Calu3 (cell line): ENCODE measurements at regions of chr6 and their contacts with region 1.

Region 1: DNA sequence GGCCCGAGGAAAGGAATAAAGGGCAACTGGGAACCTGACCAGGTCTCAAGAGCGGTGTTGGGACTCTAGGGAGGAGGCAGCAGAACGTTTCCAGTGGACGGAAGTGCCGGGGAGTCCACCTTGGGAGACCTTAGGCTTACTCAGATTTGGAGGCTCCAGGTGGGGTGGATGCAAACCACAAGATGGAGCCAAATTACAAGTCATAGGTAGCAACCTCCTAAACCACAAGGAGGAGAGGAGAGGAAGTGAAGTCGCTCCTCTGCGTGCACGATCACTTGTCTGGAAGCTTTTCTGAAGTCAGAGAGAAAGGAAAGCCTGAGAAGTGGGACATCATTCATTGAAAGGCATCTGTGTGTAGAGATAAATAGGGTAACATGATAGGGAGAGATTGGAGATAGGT is 9.3 kb downstream of the HLA-DOA start:
- DNase-seq: peak; percentile 74
- H3K4me3 Mint-ChIP-seq: no peak overlapping the region
- H3K27ac Mint-ChIP-seq: no peak overlapping the region
- H3K4me1 Mint-ChIP-seq: peaks cover 10% of the 10 kb centered on the region
- H3K27me3 Mint-ChIP-seq: peaks cover 63% of the 10 kb centered on the region
- CTCF ChIP-seq: peak; percentile 70

Region 2: DNA sequence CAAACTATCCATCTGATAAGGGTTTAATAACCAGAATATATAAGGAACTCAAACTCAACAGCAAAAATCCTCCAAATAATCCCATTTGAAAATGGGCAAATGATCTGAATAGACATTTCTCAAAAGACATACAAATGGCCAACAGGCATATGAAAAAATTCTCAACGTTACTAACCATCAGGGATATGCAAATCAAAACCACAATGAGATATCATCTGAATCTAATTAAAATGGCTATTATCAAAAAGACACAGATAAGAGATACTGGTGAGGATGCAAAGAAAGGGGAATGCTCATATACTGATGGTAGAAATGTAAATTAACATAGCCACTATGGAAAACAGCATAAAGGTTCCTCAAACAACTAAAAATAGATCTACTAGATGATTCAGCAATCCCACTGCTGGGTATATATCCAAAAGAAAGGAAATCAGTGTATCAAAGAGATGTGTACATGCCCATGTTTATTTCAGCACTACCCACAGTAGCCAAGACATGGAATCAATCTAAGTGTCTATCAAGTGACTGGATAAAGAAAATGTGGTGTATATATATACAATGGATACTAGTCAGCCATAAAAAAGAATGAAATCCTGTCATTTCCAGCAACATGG is 37.7 kb before region 1 on chr6:
- CTCF ChIA-PET with region 1: no interaction called
- intact Hi-C with region 1: no loop called
- DNase-seq: no peak
- H3K4me3 Mint-ChIP-seq: no peak overlapping the region
- H3K27ac Mint-ChIP-seq: no peak overlapping the region
- H3K4me1 Mint-ChIP-seq: peaks cover 42% of the 10 kb centered on the region
- H3K27me3 Mint-ChIP-seq: no peaks in the 10 kb centered on the region
- CTCF ChIP-seq: no peak

Region 3: DNA sequence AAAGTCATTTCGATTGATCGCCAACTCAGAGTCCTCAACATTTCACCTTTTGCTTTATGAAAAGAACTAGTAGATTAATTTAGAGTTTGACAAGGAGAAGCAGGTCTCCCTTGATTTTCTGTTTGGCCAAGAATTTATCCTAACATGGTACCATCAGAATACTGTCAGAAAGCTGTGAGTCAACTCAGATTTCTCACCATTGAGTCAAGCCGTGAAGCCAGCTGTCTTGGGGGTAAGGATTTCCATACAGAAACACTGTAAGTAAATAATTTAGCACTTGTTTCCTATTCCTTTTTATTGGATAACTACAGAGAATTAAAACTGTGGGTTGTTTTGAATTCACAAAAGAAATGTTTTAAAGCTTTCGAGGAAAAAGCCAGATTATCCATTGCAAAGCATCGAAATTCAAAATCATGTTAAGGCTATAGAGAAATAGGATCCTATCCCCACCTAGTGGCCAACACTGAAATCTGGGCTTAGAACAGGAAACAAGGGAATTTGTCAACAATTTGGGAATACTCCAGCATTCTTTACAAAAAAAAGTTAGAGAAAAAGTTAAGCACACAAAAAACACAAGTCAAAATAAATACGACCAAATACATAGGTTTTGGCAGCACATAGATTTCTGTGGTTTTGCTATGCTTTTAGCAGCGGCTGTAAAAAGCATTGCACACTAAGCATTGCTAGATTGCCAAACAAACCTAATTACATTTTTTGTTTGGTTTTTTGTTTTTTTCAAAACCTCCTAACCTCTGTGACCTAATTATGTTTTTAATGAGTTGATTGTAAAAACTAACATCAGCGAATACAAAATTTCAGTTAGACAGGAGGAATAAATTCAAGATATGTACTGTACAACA is 148.0 kb after region 1 on chr6:
- CTCF ChIA-PET with region 1: interaction called, 4 read pairs
- intact Hi-C with region 1: loop called (anchors 2 kb)
- DNase-seq: peak; percentile 48
- H3K4me3 Mint-ChIP-seq: no peak overlapping the region
- H3K27ac Mint-ChIP-seq: no peak overlapping the region
- H3K4me1 Mint-ChIP-seq: no peaks in the 10 kb centered on the region
- H3K27me3 Mint-ChIP-seq: peaks cover 59% of the 10 kb centered on the region
- CTCF ChIP-seq: peak; percentile 76

Region 4: DNA sequence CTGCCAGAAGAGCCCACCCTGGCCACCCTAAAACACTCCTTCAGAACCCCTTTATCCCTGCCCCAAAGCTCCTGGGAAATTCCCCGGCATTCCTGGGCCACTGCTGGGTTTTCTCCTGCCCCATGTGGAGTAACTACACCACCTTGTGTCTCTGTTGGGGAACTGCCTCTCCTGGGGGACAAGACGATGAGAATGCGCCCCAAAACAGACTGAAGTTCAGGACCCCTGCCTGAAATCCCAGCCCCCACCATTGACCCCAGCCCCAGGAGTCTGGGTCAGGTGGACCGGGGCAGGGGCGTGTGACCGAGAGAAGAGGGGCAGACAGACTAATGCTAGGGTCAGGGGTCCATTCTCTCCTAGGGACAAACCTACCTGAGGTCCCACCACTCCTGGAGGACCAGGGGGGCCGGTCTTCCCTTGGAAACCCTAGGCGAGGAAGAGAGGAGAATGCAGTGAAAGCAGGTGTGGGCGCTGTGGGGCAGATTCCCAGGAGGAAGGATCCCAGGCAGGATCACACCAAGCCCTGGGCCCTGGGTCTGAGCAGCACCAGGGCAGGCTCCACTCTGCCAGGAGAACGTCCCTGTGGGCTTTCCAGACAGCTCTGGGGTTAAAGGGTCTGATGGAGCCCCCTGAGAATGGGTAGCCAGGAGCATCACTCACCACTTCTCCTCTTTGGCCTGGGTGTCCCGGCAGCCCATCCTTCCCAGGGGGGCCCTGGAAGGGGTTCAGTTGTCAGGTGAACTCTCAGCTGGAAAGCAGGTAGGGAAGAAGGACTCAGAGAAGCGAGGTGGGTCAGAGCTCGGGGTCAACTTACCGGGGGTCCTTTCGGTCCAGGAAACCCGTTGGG is 172.9 kb after region 1 on chr6:
- CTCF ChIA-PET with region 1: interaction called, 10 read pairs
- intact Hi-C with region 1: loop called (anchors 1 kb)
- DNase-seq: peak; percentile 69
- H3K4me3 Mint-ChIP-seq: no peak overlapping the region
- H3K27ac Mint-ChIP-seq: peak overlapping the region; percentile 25
- H3K4me1 Mint-ChIP-seq: peaks cover 9% of the 10 kb centered on the region
- H3K27me3 Mint-ChIP-seq: peaks cover 89% of the 10 kb centered on the region
- CTCF ChIP-seq: peak; percentile 80

Region 5: GRCh38 chr6:33425668-33426577 is 425.9 kb after region 1 on chr6:
- CTCF ChIA-PET with region 1: interaction called, 10 read pairs
- intact Hi-C with region 1: no loop called
- DNase-seq: peak; percentile 95
- H3K4me3 Mint-ChIP-seq: peak overlapping the region; percentile 87
- H3K27ac Mint-ChIP-seq: peak overlapping the region; percentile 64
- H3K4me1 Mint-ChIP-seq: peaks cover 49% of the 10 kb centered on the region
- H3K27me3 Mint-ChIP-seq: peaks cover 28% of the 10 kb centered on the region
- CTCF ChIP-seq: peak; percentile 76